ENCODE measurements at regions of chr6 and their contacts with region 1.

Region 1: GRCh38 chr6:88761237-88762031 is 202.0 kb downstream of the RNGTT start:
- DNase-seq: peak in 1 of 35 experiments; percentile 32
- ATAC-seq: no peak
- H3K4me3 ChIP-seq: no peak overlapping the region
- H3K4me3 Mint-ChIP-seq: no peak overlapping the region
- H3K27ac ChIP-seq: no peak overlapping the region
- H3K27ac Mint-ChIP-seq: no peak overlapping the region
- H3K4me1 ChIP-seq: no peaks in the 10 kb centered on the region
- H3K4me1 Mint-ChIP-seq: peaks cover 0 to 6% (median 2%) of the 10 kb centered on the region in 3 donors
- H3K27me3 ChIP-seq: no peaks in the 10 kb centered on the region
- H3K27me3 Mint-ChIP-seq: no peaks in the 10 kb centered on the region

Region 2: GRCh38 chr6:88780714-88781389 is 19.4 kb after region 1 on chr6:
- CTCF ChIA-PET with region 1: interaction called in 1 of 2 experiments, 10 read pairs
- POLR2A ChIA-PET with region 1: no interaction called
- DNase-seq: peak in 34 of 35 experiments; percentile 2 to 78 (median 30)
- ATAC-seq: peak; percentile 61 to 73 (median 68)
- H3K4me3 ChIP-seq: no peak overlapping the region
- H3K4me3 Mint-ChIP-seq: no peak overlapping the region
- H3K27ac ChIP-seq: no peak overlapping the region
- H3K27ac Mint-ChIP-seq: no peak overlapping the region
- H3K4me1 ChIP-seq: no peaks in the 10 kb centered on the region
- H3K4me1 Mint-ChIP-seq: peaks cover 3 to 21% (median 5%) of the 10 kb centered on the region in 3 donors
- H3K27me3 ChIP-seq: no peaks in the 10 kb centered on the region
- H3K27me3 Mint-ChIP-seq: no peaks in the 10 kb centered on the region

Region 3: DNA sequence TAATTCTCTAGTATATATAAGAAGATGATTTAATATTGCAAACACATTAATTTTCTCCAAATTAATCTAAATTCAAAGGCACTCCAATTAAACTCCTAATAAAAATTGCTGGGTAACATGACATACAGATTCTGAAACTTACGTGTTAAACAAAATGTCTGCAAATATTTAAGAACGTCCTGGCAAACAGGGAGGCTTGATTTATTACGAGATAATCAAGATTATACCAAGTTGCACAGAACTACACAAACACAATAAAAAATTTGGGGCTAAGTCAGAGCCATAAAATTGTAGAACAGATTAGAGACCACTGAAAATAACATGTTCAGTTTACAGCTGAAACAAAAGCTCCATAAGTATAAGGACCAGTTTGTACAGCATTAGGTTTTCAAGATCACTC is 35.5 kb after region 1 on chr6:
- CTCF ChIA-PET with region 1: no interaction called
- POLR2A ChIA-PET with region 1: no interaction called
- DNase-seq: no peak
- ATAC-seq: no peak
- H3K4me3 ChIP-seq: no peak overlapping the region
- H3K4me3 Mint-ChIP-seq: no peak overlapping the region
- H3K27ac ChIP-seq: no peak overlapping the region
- H3K27ac Mint-ChIP-seq: no peak overlapping the region
- H3K4me1 ChIP-seq: no peaks in the 10 kb centered on the region
- H3K4me1 Mint-ChIP-seq: peaks cover 0 to 7% (median 0%) of the 10 kb centered on the region in 3 donors
- H3K27me3 ChIP-seq: no peaks in the 10 kb centered on the region
- H3K27me3 Mint-ChIP-seq: no peaks in the 10 kb centered on the region